ENCODE measurements at regions of chr5 and their contacts with region 1.

Region 1: DNA sequence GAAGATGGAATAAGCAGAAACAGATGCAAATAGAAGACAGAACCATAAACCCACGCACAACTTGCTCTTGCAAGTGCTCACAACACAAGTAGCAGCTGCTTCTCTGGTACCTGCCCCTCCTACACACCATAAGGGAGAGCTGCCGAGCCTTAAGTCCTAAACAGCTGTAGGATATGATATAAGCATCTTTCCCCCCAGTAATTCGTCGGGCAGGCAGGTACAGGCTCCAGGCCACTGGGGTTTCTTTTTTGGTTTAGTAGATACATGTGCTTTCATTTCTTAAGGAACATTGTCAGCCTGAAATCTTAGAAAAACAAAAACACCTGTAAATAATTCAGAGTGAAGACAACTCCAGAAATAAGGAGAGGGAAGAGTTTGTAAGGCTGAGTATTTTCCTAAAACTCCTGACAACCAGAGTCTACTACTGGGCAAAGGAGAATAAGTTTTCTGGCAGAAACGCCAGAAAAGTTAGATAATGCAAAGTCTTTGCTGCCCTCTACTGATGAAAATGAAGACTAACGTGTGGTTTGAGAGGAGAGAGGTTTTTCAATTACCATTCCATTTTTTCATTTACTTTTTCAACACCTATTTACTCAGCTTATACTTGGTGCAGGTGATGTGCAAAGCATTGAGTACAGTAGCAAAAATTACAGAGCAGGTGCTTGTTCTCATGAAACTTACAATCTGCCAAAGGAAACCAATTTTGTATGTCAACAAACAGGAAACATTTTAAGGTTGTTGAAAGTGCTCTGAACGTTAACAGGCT is 20.1 kb upstream of the TCERG1 start:
- DNase-seq: no peak
- H3K4me3 ChIP-seq: no peak overlapping the region
- H3K27ac ChIP-seq: no peak overlapping the region
- H3K4me1 ChIP-seq: no peaks in the 10 kb centered on the region; a peak in 1 of 7 replicates
- H3K27me3 ChIP-seq: no peaks in the 10 kb centered on the region; a peak in 1 of 7 replicates
- CTCF ChIP-seq: peak in 2 of 3 experiments; percentile 59 to 68; a peak in 2 of 4 replicates
- EP300 ChIP-seq: no peak
- POLR2A ChIP-seq: no peak
- RAD21 ChIP-seq: peak; percentile 89

Region 2: GRCh38 chr5:146291421-146292074 is 135.5 kb before region 1 on chr5:
- CTCF ChIA-PET with region 1: interaction called, 18 read pairs
- POLR2A ChIA-PET with region 1: no interaction called
- DNase-seq: no peak
- H3K4me3 ChIP-seq: no peak overlapping the region
- H3K27ac ChIP-seq: no peak overlapping the region
- H3K4me1 ChIP-seq: no peaks in the 10 kb centered on the region
- H3K27me3 ChIP-seq: no peaks in the 10 kb centered on the region
- CTCF ChIP-seq: peak in 2 of 3 experiments; percentile 37 to 67; a peak in 2 of 4 replicates
- EP300 ChIP-seq: no peak
- POLR2A ChIP-seq: no peak
- RAD21 ChIP-seq: peak; percentile 79 to 80

Region 3: GRCh38 chr5:146313027-146313426 is 114.0 kb before region 1 on chr5:
- CTCF ChIA-PET with region 1: interaction called, 11 read pairs
- POLR2A ChIA-PET with region 1: no interaction called
- DNase-seq: no peak
- H3K4me3 ChIP-seq: no peak overlapping the region
- H3K27ac ChIP-seq: no peak overlapping the region
- H3K4me1 ChIP-seq: peaks cover 0 to 3% (median 1%) of the 10 kb centered on the region in 4 experiments; a peak in 2 of 7 replicates
- H3K27me3 ChIP-seq: no peaks in the 10 kb centered on the region
- CTCF ChIP-seq: no peak
- EP300 ChIP-seq: no peak
- POLR2A ChIP-seq: no peak
- RAD21 ChIP-seq: no peak

Region 4: DNA sequence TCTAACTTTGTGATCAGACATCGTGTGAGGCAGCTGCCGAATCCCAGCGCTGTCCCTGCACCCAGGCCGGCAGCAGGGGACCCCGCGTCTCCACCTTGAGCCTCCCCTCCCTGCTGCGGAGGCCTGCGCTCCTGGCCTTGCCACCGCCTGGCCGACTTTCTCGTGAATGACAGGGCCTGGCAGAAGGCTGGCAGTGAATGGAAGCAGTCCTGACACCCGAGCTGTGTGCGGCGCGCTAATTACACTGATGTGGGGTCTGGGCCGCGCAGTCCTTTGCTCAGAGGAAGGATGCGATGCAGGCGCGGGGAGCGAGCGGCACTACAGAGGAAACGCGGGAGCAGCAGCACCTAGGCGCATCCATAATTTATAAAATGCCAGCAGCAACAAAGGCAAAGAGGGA is 48.0 kb before region 1 on chr5:
- CTCF ChIA-PET with region 1: interaction called, 14 read pairs
- POLR2A ChIA-PET with region 1: no interaction called
- DNase-seq: peak in 1 of 2 experiments; percentile 54
- H3K4me3 ChIP-seq: no peak overlapping the region
- H3K27ac ChIP-seq: no peak overlapping the region
- H3K4me1 ChIP-seq: no peaks in the 10 kb centered on the region
- H3K27me3 ChIP-seq: no peaks in the 10 kb centered on the region; a peak in 2 of 7 replicates
- CTCF ChIP-seq: no peak
- EP300 ChIP-seq: no peak
- POLR2A ChIP-seq: no peak
- RAD21 ChIP-seq: no peak

Region 5: GRCh38 chr5:146399481-146399880 is 27.6 kb before region 1 on chr5:
- CTCF ChIA-PET with region 1: interaction called, 33 read pairs
- POLR2A ChIA-PET with region 1: no interaction called
- DNase-seq: no peak
- H3K4me3 ChIP-seq: no peak overlapping the region
- H3K27ac ChIP-seq: no peak overlapping the region
- H3K4me1 ChIP-seq: peaks cover 0 to 7% (median 1%) of the 10 kb centered on the region in 4 experiments; a peak in 1 of 7 replicates
- H3K27me3 ChIP-seq: no peaks in the 10 kb centered on the region; a peak in 1 of 7 replicates
- CTCF ChIP-seq: no peak
- EP300 ChIP-seq: no peak
- POLR2A ChIP-seq: no peak
- RAD21 ChIP-seq: no peak

Region 6: GRCh38 chr5:146529984-146530383 is 102.9 kb after region 1 on chr5:
- CTCF ChIA-PET with region 1: no interaction called
- POLR2A ChIA-PET with region 1: no interaction called
- DNase-seq: no peak
- H3K4me3 ChIP-seq: no peak overlapping the region
- H3K27ac ChIP-seq: no peak overlapping the region
- H3K4me1 ChIP-seq: peaks cover 0 to 7% (median 3%) of the 10 kb centered on the region in 4 experiments; a peak in 4 of 7 replicates
- H3K27me3 ChIP-seq: no peaks in the 10 kb centered on the region
- CTCF ChIP-seq: no peak
- EP300 ChIP-seq: no peak
- POLR2A ChIP-seq: no peak
- RAD21 ChIP-seq: no peak

Measured in H1 (cell line).